PC-9 (cell line): ENCODE measurements at regions of chr5 and their contacts with region 1.

Region 1: DNA sequence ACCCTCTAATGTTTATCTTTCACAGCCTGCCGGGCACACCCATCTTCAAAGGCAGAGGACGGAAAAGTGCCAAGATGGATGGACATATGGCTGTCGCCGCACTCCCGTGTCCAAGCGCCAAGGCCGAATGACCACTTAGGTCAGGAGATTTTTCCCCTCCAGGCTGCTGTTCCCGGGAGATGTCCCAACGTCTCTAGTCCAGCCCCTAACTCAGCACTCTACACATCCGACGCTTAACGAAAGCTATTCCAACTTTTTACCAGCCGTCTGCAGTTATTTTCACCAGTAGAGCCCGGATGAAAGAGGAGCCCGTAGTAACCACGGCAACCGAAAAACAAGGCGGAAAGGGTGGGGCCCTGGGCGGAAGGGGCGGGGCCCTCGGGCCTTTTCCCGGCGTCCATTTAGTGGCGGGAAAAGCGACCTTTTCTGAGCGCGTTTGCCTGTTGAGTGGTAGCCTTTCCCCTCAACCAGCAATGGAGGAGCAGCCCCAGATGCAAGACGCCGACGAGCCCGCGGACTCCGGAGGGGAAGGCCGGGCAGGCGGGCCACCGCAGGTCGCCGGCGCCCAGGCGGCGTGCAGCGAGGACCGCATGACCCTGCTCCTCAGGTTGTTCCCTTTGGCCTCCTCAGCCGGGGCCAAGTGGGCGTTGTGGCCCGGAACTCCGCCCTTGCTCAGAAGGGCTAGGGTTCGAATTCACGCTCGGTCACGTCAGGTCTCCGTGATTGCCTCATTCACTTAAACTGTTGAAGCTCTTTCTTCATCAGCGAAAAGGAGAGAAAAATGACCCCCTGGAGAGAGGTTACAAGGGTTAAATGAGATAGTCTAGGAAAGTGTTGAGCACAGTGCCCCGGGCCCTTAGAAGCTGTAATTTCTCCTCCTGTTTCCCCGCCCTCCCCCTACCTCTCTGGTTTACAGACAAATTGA is at the start of gene CENPH:
- DNase-seq: peak; percentile 83 to 94
- H3K4me3 ChIP-seq: peak within 1 kb of the TSS; percentile 64
- H3K27ac ChIP-seq: peak within 1 kb of the TSS; percentile 57
- H3K4me1 ChIP-seq: peaks cover 15% of the 10 kb centered on the region; the same call in 1 of the 2 replicates
- H3K27me3 ChIP-seq: no peaks in the 10 kb centered on the region
- CTCF ChIP-seq: no peak
- total RNA-seq, gene CENPH: 30.1 and 45.7 TPM in 2 replicates

Region 2: DNA sequence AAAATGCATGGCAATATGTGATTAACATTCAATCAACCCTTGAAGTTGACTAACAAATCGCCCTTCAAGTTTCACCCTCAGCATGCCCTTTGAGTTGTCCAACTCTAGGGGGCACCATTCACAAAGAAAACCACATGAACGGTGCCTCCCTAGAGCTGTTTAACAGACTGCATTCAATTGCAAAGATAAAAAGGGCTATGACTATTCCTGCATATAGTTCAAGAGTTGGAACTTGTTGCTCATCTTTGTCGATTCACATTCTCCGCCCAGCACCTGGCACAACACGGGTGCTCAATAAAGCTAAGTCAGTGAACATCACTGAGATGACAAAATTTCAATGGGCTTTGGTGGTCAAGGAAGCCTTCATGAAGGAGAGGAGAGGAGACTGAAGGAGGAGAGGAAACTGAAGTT is 165.2 kb before region 1 on chr5:
- CTCF ChIA-PET with region 1: no interaction called
- POLR2A ChIA-PET with region 1: interaction called, 18 read pairs
- intact Hi-C with region 1: no loop called
- DNase-seq: peak; percentile 22 to 55
- H3K4me3 ChIP-seq: no peak overlapping the region
- H3K27ac ChIP-seq: no peak overlapping the region
- H3K4me1 ChIP-seq: no peaks in the 10 kb centered on the region
- H3K27me3 ChIP-seq: no peaks in the 10 kb centered on the region
- CTCF ChIP-seq: peak; percentile 80